PC-9 (cell line): ENCODE measurements at regions of chr14 and their contacts with region 1.

Region 1: GRCh38 chr14:77320238-77320935 is at the start of gene POMT2:
- DNase-seq: peak; percentile 89 to 100
- H3K4me3 ChIP-seq: peak within 1 kb of the TSS; percentile 83
- H3K27ac ChIP-seq: peak within 1 kb of the TSS; percentile 72
- H3K4me1 ChIP-seq: peaks cover 18% of the 10 kb centered on the region
- H3K27me3 ChIP-seq: no peaks in the 10 kb centered on the region
- CTCF ChIP-seq: peak; percentile 76
- total RNA-seq, gene POMT2: 96.5 and 109 TPM in 2 replicates

Region 2: GRCh38 chr14:77033622-77034521 is 286.5 kb before region 1 on chr14:
- CTCF ChIA-PET with region 1: no interaction called
- POLR2A ChIA-PET with region 1: no interaction called
- intact Hi-C with region 1: loop called (anchors 2 kb)
- DNase-seq: peak; percentile 94
- H3K4me3 ChIP-seq: peak overlapping the region; percentile 56
- H3K27ac ChIP-seq: peak overlapping the region; percentile 93
- H3K4me1 ChIP-seq: peaks cover 92% of the 10 kb centered on the region
- H3K27me3 ChIP-seq: no peaks in the 10 kb centered on the region
- CTCF ChIP-seq: peak; percentile 17; the same call in 1 of the 2 replicates

Region 3: GRCh38 chr14:77124345-77125280 is 195.8 kb before region 1 on chr14:
- CTCF ChIA-PET with region 1: interaction called, 8 read pairs
- POLR2A ChIA-PET with region 1: interaction called, 7 read pairs
- intact Hi-C with region 1: loop called (anchors 1 kb)
- DNase-seq: peak in 1 of 2 experiments; percentile 81
- H3K4me3 ChIP-seq: peak overlapping the region; percentile 31; the same call in 1 of the 2 replicates
- H3K27ac ChIP-seq: no peak overlapping the region
- H3K4me1 ChIP-seq: peaks cover 26% of the 10 kb centered on the region
- H3K27me3 ChIP-seq: peaks cover 51% of the 10 kb centered on the region
- CTCF ChIP-seq: peak; percentile 28; the same call in 1 of the 2 replicates

Region 4: GRCh38 chr14:77376771-77377501 is 56.5 kb after region 1 on chr14 and contains the starts of genes SAMD15 and TMED8:
- CTCF ChIA-PET with region 1: interaction called, 11 read pairs
- POLR2A ChIA-PET with region 1: interaction called, 7 read pairs
- intact Hi-C with region 1: loop called (anchors 1 kb)
- DNase-seq: peak; percentile 83 to 97
- H3K4me3 ChIP-seq: peak within 1 kb of the TSS; percentile 82
- H3K27ac ChIP-seq: peak within 1 kb of the TSS; percentile 40
- H3K4me1 ChIP-seq: peaks cover 19% of the 10 kb centered on the region
- H3K27me3 ChIP-seq: no peaks in the 10 kb centered on the region
- CTCF ChIP-seq: peak; percentile 46; the same call in 1 of the 2 replicates
- total RNA-seq, gene SAMD15: 4.8 and 7.8 TPM in 2 replicates
- total RNA-seq, gene TMED8: 32.1 and 42.6 TPM in 2 replicates

Region 5: DNA sequence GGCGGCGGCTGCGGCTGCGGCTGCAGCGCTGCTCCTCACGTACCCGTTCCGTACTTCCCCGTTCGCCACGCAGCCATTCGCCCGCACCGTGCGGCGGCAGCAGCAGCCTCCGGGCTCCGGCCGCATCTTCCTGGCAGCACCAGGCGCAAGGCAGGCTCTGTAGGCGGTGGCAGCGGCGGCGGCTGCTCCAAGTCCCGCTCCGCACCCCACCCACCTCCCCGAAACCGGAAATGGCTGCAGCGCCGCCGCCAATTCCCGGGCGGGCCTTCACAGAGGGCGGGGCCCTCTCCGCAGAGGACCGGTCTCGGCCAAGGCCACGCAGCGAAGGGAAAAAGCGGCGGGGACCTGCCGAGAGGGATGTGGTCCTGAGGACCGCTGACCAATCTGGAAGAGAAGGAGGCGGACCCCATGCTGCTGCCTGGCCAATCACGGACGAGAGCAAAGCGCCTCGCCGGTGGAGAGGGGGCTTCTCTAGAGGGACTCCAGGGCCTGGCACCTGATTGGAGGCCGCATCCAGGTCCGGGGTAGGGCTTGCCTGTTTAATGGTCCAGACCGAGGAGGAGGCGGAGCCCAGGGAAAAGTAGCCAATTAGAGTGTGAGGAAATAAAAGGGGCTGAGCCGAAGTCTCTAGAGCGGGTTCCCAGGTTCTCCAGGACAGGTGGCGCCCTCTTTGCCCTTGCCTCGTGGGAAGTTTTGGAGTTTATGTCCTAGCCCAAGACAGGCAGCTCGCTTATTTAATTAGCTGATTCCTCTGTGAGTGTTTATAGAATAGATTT is 296.3 kb after region 1 on chr14 and contains the start of gene SPTLC2:
- CTCF ChIA-PET with region 1: interaction called, 9 read pairs
- POLR2A ChIA-PET with region 1: no interaction called
- intact Hi-C with region 1: loop called (anchors 2 kb)
- DNase-seq: peak; percentile 100
- H3K4me3 ChIP-seq: peak within 1 kb of the TSS; percentile 85
- H3K27ac ChIP-seq: peak within 1 kb of the TSS; percentile 76
- H3K4me1 ChIP-seq: peaks cover 50% of the 10 kb centered on the region
- H3K27me3 ChIP-seq: no peaks in the 10 kb centered on the region
- CTCF ChIP-seq: no peak
- total RNA-seq, gene SPTLC2: 68.4 and 81.7 TPM in 2 replicates